MCF 10A (cell line): ENCODE measurements at regions of chrX and their contacts with region 1.

Region 1: DNA sequence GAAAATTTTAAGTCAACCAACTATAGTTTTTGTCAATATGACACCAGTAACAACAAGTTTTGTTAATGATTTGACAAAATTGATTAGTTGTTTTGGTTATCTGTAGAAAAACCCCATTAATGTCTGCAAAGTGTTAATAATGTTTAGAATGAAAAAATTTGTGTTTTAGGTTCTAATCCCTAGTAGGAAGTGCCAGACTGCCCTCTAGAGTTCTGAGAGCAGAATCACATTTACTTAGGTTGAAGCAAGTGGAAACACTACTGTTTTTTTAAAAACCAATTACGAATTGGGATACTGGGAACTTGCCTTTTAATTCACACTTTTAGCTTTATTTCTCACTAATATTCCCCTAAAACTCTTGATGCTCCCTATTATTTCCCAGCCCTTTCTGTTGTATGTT is 101.1 kb upstream of the CYLC1 start:
- DNase-seq: peak; percentile 76
- H3K4me3 Mint-ChIP-seq: no peak overlapping the region
- H3K27ac Mint-ChIP-seq: no peak overlapping the region
- H3K4me1 Mint-ChIP-seq: peaks cover 12% of the 10 kb centered on the region
- H3K27me3 Mint-ChIP-seq: no peaks in the 10 kb centered on the region
- CTCF ChIP-seq: peak; percentile 74

Region 2: GRCh38 chrX:83469551-83469950 is 290.3 kb before region 1 on chrX:
- CTCF ChIA-PET with region 1: interaction called, 4 read pairs
- POLR2A ChIA-PET with region 1: interaction called, 3 read pairs
- intact Hi-C with region 1: loop called (anchors 1 kb)
- DNase-seq: peak; percentile 59
- H3K4me3 Mint-ChIP-seq: no peak overlapping the region
- H3K27ac Mint-ChIP-seq: no peak overlapping the region
- H3K4me1 Mint-ChIP-seq: peaks cover 5% of the 10 kb centered on the region
- H3K27me3 Mint-ChIP-seq: no peaks in the 10 kb centered on the region
- CTCF ChIP-seq: peak; percentile 51